Activated CD4-positive, alpha-beta T cell treated with anti-CD3 and anti-CD28 coated beads for 36 hours (primary cell): ENCODE measurements at regions of chr15 and their contacts with region 1.

Region 1: GRCh38 chr15:72009222-72009621 is 108.7 kb downstream of the MYO9A start:
- DNase-seq: no peak
- ATAC-seq: no peak
- H3K4me3 Mint-ChIP-seq: no peak overlapping the region
- H3K27ac Mint-ChIP-seq: no peak overlapping the region
- H3K4me1 Mint-ChIP-seq: peaks cover 5% of the 10 kb centered on the region
- H3K27me3 Mint-ChIP-seq: no peaks in the 10 kb centered on the region

Region 2: DNA sequence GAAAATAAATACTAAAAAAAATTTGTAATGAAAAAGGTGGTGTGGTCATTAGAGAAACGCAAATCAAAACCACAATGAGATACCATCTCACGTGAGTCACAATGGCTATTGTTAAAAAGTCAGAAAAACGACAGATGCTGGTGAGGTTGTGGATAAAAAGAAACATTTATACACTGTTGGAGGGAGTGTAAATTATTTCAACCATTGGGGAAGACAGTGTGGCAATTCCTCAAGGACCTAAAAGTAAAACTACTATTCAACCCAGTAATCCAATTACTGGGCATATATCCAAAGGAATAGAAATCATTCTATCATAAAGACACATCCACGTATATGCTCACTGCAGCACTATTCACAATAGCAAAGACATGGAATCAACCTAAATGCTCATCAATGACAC is 11.5 kb before region 1 on chr15:
- CTCF ChIA-PET with region 1: no interaction called
- POLR2A ChIA-PET with region 1: no interaction called
- intact Hi-C with region 1: loop called in 1 of 2 experiments (anchors 1 kb)
- DNase-seq: no peak
- ATAC-seq: no peak
- H3K4me3 Mint-ChIP-seq: no peak overlapping the region
- H3K27ac Mint-ChIP-seq: no peak overlapping the region
- H3K4me1 Mint-ChIP-seq: no peaks in the 10 kb centered on the region
- H3K27me3 Mint-ChIP-seq: no peaks in the 10 kb centered on the region